ENCODE measurements at regions of chr12 and their contacts with region 1.

Region 1: DNA sequence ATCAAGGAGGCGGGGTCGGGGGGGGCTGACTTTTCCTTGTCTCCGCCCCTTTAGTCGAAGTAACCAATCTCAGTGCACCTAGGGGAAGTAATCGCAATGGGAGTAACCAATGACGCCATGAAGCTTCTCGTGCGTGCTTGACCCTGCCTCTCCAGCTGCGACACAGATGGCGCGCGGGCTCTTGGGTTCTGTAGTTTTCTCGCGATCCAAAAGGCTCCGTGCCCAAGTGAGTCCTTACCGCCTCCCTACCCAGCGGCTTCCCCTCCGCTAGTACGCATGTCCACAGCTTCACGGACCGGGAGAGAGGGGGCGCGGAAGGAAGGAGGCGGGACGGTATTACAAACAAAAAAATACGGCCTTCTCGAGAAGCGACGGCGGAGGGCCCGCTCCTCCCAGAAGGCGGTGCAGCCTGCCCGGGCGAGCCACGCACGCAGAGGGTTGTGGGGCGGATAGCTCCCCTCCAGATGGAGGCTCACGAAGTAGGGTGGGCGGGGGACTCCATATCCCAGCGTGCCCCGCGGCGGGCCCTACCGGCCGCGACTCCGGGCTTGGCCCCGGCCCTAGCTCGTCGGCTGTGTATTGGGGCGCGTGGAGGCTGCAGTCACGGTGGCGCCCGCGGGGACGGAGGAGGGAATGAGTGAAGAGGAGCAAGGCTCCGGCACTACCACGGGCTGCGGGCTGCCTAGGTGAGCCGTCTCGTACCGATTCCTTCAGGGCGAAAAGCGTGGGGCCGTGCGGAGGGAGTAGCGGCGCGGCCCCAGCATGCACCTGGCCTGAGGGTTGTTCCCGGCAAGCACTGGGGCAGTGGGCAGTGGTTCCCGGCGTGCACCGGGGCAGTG is at the start of gene TARBP2:
- DNase-seq: peak; percentile 100
- H3K4me3 ChIP-seq: peak within 1 kb of the TSS; percentile 64 to 71
- H3K27ac ChIP-seq: peak within 1 kb of the TSS; percentile 99
- H3K4me1 ChIP-seq: peaks cover 78% of the 10 kb centered on the region
- H3K27me3 ChIP-seq: no peaks in the 10 kb centered on the region
- CTCF ChIP-seq: no peak
- POLR2A ChIP-seq: no peak
- total RNA-seq, gene TARBP2: 17.7 TPM

Region 2: GRCh38 chr12:53352331-53353256 is 148.4 kb before region 1 on chr12:
- intact Hi-C with region 1: loop called (anchors 2 kb)
- DNase-seq: no peak
- H3K4me3 ChIP-seq: no peak overlapping the region
- H3K27ac ChIP-seq: no peak overlapping the region
- H3K4me1 ChIP-seq: no peaks in the 10 kb centered on the region
- H3K27me3 ChIP-seq: no peaks in the 10 kb centered on the region
- CTCF ChIP-seq: peak; percentile 80 to 97 (median 81)
- POLR2A ChIP-seq: no peak

Region 3: DNA sequence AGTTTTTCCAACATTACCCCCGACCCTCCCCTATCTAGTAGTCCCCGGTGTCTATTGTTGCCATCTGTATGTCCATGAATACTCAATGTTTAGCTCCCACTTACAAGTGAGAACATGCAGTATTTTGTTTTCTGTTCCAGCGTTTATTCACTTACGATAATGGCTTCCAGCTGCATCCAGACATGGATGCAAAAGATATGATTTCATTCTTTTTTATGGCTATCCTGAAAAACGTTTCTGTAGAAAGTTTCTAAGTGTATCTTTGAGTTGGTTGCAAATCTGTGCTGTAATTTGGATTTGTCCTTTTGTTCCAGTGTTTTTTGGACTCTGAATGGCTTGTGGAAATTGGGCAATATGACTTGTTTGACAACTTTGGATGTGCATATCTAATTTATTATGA is 109.3 kb before region 1 on chr12:
- intact Hi-C with region 1: no loop called
- DNase-seq: no peak
- H3K4me3 ChIP-seq: no peak overlapping the region
- H3K27ac ChIP-seq: peak overlapping the region; percentile 34
- H3K4me1 ChIP-seq: peaks cover 76% of the 10 kb centered on the region
- H3K27me3 ChIP-seq: no peaks in the 10 kb centered on the region
- CTCF ChIP-seq: no peak
- POLR2A ChIP-seq: no peak

Region 4: DNA sequence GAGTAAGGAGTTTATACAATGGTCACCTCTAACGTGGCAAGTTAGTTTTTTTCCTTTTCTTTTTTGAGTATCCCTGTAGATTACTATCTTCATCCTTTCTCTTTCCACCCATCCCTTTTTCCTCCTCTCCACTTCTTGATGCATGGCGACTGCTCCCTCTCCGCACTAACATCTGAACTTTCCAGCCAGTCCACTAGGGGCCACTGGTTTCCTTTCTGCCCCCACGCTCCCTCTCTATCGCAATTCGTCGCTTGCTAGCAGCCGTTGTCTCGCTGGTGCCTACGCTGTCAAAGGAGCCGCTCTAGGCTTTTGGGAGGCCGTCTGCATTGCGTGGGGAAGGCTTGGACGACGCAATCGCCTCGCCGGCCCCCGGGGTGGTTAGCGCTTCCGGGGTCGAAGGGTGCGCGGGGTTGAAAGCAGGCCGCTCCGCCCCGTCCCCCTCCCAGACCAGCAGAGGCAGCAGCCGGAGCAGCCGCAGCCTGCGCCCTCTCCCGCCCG is 49.3 kb before region 1 on chr12 and contains the start of gene PCBP2:
- intact Hi-C with region 1: loop called (anchors 5 kb)
- DNase-seq: peak; percentile 98
- H3K4me3 ChIP-seq: peak within 1 kb of the TSS; percentile 74 to 80
- H3K27ac ChIP-seq: peak within 1 kb of the TSS; percentile 98
- H3K4me1 ChIP-seq: peaks cover 25% of the 10 kb centered on the region
- H3K27me3 ChIP-seq: no peaks in the 10 kb centered on the region
- CTCF ChIP-seq: peak; percentile 83 to 93 (median 84)
- POLR2A ChIP-seq: peak in 1 of 2 donors; percentile 59
- total RNA-seq, gene PCBP2: 488 TPM

Region 5: DNA sequence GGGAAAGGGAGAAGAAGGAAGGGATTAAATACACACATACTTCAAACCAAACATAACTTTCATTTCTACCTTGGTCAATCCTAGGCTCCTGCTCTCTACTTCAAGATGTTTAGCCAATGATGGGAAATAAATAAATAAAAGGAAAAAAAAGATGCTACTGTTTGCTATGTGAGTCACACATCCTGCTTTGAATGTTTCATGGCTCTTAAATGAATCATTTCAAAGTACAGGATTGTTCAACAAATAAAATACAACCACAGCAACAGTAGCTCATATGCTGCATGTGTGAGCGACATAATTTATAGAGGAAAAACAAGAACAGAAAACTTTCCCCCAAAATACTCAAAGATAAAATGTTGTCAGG is 60.6 kb after region 1 on chr12:
- intact Hi-C with region 1: loop called (anchors 2 kb)
- DNase-seq: no peak
- H3K4me3 ChIP-seq: no peak overlapping the region
- H3K27ac ChIP-seq: no peak overlapping the region
- H3K4me1 ChIP-seq: peaks cover 44% of the 10 kb centered on the region
- H3K27me3 ChIP-seq: no peaks in the 10 kb centered on the region
- CTCF ChIP-seq: no peak
- POLR2A ChIP-seq: no peak

Measured in vagina (tissue), 2 donors.